Activated CD8-positive, alpha-beta T cell treated with anti-CD3 and anti-CD28 coated beads for 36 hours (primary cell): ENCODE measurements at regions of chr19 and their contacts with region 1.

Region 1: GRCh38 chr19:45886427-45887199 is 672 bp upstream of the IRF2BP1 start:
- DNase-seq: peak; percentile 98
- ATAC-seq: peak; percentile 85
- H3K4me3 Mint-ChIP-seq: peak overlapping the region; percentile 84
- H3K27ac Mint-ChIP-seq: peak overlapping the region; percentile 92
- H3K4me1 Mint-ChIP-seq: peaks cover 16% of the 10 kb centered on the region
- H3K27me3 Mint-ChIP-seq: no peaks in the 10 kb centered on the region
- CTCF ChIP-seq: no peak

Region 2: DNA sequence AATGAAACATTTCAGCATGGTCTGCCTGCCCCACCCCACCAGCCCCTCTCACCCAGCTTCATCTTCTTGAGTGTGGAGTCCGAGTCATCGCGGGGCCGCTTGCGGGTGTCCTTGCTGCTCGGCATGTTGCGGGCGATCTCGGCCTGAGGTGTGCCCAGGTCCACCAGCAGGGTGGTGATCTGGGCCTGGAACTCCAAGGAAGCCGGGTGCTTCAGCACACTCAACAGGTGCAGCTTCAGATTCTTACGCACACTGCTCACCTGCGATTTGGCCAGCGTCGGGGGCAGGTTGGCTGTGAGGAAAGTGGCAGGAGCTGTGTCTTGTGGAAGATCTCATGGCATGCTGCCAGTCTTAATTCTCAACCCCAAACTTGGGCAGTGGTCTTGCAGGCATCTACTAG is 44.4 kb before region 1 on chr19:
- CTCF ChIA-PET with region 1: no interaction called
- POLR2A ChIA-PET with region 1: no interaction called
- intact Hi-C with region 1: no loop called
- DNase-seq: no peak
- ATAC-seq: no peak
- H3K4me3 Mint-ChIP-seq: no peak overlapping the region
- H3K27ac Mint-ChIP-seq: no peak overlapping the region
- H3K4me1 Mint-ChIP-seq: no peaks in the 10 kb centered on the region
- H3K27me3 Mint-ChIP-seq: no peaks in the 10 kb centered on the region
- CTCF ChIP-seq: no peak

Region 3: GRCh38 chr19:45862564-45863334 is 23.9 kb before region 1 on chr19 and contains the start of gene SYMPK:
- CTCF ChIA-PET with region 1: interaction called, 100 read pairs
- POLR2A ChIA-PET with region 1: interaction called, 24 read pairs
- intact Hi-C with region 1: no loop called
- DNase-seq: peak; percentile 99
- ATAC-seq: peak; percentile 98
- H3K4me3 Mint-ChIP-seq: peak within 1 kb of the TSS; percentile 85
- H3K27ac Mint-ChIP-seq: peak within 1 kb of the TSS; percentile 98
- H3K4me1 Mint-ChIP-seq: peaks cover 25% of the 10 kb centered on the region
- H3K27me3 Mint-ChIP-seq: peaks cover 25% of the 10 kb centered on the region
- CTCF ChIP-seq: no peak
- total RNA-seq, gene SYMPK: 96.8 to 114 TPM